ENCODE measurements at regions of chr1 and their contacts with region 1.

Region 1: DNA sequence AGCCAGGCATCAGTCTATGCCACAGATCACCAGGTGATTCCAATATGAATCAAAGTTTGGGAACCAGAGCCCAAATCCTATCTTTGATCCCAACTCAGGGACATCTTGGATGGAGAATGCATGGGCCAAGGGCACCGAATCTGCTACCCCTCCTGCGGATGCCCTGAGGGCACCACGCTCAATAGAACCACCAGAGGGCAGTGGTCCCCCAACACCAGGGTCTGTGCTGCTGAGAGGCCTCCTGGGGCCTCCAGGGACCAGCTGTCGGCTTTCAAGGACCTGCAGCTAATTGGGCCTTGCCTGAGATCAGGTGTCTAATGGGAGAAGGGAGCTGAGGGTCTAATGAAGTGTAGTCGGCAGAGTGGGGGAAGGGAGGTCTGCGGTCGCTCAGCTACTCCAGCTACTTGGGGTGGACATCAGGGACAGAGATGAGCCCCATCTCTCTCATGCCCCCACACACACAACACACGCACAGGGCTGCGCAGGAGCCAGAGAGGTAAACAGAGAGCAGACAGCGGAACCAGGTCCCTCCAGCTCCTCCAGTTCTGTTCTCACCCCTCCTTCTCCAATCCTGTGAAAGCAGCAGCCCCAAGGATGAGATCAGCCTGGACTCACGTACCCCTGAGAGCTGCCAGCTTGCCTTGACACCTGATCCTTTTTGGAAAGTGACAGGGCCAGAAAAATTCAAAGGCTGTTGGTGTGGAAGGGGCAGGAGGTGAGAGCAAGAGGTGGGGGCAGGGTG is 34.9 kb upstream of the PPP1R15B start:
- DNase-seq: peak; percentile 77
- ATAC-seq: peak; percentile 54

Region 2: DNA sequence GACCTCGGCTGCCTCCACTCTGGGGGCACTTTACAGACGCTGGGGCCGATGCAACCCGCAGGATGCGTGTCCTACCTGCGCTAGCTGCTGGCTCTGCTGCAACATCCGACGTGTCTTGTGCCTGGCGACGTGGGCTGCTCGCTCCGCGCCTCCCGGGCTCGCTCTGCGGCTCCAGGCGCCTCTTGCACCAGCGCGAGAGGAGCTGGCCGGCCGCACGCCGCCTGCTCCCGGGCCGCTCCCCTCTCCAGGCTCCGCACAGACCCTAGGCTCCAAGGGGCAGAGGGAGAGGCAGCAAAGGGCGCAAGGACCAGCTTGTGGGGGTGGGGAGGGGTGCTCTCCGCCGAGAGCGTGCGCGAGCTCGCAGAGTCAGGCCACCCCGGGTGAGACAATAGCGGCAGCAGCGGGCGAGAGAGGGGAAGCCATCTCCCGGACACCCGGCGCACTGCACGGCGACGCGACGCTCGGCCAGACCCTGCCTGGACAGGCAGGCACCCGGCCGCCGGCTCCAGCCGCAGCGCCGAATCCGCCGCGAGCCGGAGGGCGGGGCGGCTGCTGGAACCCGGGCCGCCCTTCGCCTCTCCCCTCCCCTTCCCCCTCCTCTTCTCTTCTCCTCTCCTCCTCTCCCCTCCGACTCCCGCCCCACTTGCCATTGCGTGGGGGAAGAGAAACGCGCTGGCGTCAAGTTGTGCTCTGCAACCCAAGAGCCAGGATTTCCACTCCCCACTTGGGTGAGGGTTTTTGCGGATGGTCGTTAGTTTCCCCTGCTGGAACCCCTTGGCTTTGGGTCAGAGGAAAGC is 47.9 kb after region 1 on chr1 and contains the start of gene PIK3C2B:
- intact Hi-C with region 1: loop called (anchors 5 kb)
- DNase-seq: peak; percentile 88
- ATAC-seq: peak; percentile 91
- total RNA-seq, gene PIK3C2B: 52.2 TPM

Region 3: GRCh38 chr1:204619721-204620120 is 173.2 kb after region 1 on chr1:
- intact Hi-C with region 1: no loop called
- DNase-seq: no peak
- ATAC-seq: no peak

Region 4: GRCh38 chr1:205440476-205441317 is 994.2 kb after region 1 on chr1:
- intact Hi-C with region 1: no loop called
- DNase-seq: peak; percentile 75
- ATAC-seq: peak; percentile 88